PC-9 (cell line): ENCODE measurements at regions of chr3 and their contacts with region 1.

Region 1: DNA sequence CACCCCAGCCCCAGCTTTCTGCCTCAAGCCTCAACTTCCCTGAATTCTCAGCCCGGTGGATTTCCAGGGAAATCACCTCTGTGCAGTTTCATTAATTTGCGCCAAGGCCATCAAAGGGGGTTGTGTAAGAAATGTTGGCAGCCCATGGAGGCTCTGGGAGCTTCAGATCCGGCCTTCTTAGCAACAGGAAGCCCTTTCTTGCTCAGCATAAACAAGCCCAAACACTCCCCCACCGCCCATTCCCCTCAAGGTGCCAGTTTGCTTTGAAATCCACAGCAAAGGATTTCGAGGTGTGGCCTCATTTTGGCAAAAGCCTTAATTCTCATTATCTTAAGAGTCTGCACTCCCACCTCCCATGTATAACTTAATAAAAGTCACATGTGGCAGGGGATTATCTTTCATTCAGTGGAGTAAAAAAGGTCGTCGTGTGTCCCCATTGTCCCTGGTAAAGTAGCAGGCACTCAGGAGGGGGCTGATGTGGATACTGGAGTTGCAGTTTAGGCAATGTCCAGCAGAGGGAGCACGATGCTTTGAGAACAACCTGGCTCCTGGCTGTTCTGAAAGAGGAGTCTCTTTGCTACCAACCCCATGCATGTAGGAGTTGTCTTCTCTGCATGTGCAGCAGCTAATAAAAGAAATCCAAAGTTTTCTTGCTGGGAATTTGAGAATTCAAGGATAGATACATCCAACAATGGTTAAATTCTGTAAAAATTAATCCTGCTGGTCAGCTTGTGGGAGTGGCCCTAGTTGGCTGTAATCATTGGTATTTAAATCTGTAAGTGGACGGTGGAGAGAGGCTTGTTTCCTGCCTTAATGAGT is 39.5 kb downstream of the EBLN2 start:
- DNase-seq: peak; percentile 55 to 70
- H3K4me3 ChIP-seq: no peak overlapping the region
- H3K27ac ChIP-seq: no peak overlapping the region
- H3K4me1 ChIP-seq: no peaks in the 10 kb centered on the region
- H3K27me3 ChIP-seq: peaks cover 35% of the 10 kb centered on the region
- CTCF ChIP-seq: peak; percentile 90

Region 2: DNA sequence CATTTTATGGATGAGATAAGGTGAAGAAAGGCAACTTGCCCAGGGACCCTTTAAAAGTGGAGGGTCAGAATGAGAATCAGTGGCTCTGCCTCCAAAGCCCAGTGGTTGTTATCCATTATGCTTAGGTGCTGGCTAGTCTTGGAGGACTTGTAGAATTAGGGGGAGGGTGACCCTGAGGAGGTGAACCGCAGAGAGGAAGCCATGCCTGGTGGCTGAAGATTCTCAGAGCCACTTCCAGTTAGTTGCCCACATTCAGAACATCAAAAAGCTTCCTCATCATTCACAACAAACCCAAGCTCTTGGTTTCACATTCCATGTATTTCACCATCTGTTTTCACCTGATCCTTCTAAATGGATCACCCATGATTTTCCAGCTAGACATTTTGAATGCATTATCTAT is 28.3 kb before region 1 on chr3:
- CTCF ChIA-PET with region 1: no interaction called
- POLR2A ChIA-PET with region 1: interaction called, 23 read pairs
- intact Hi-C with region 1: no loop called
- DNase-seq: no peak
- H3K4me3 ChIP-seq: no peak overlapping the region
- H3K27ac ChIP-seq: no peak overlapping the region
- H3K4me1 ChIP-seq: no peaks in the 10 kb centered on the region
- H3K27me3 ChIP-seq: no peaks in the 10 kb centered on the region
- CTCF ChIP-seq: no peak

Region 3: GRCh38 chr3:73084170-73084569 is 16.8 kb before region 1 on chr3:
- CTCF ChIA-PET with region 1: no interaction called
- POLR2A ChIA-PET with region 1: no interaction called
- intact Hi-C with region 1: no loop called
- DNase-seq: no peak
- H3K4me3 ChIP-seq: no peak overlapping the region
- H3K27ac ChIP-seq: no peak overlapping the region
- H3K4me1 ChIP-seq: no peaks in the 10 kb centered on the region
- H3K27me3 ChIP-seq: no peaks in the 10 kb centered on the region
- CTCF ChIP-seq: no peak

Region 4: GRCh38 chr3:73432023-73432705 is 331.2 kb after region 1 on chr3:
- CTCF ChIA-PET with region 1: no interaction called
- POLR2A ChIA-PET with region 1: no interaction called
- intact Hi-C with region 1: loop called (anchors 1 kb)
- DNase-seq: no peak
- H3K4me3 ChIP-seq: no peak overlapping the region
- H3K27ac ChIP-seq: no peak overlapping the region
- H3K4me1 ChIP-seq: no peaks in the 10 kb centered on the region
- H3K27me3 ChIP-seq: no peaks in the 10 kb centered on the region
- CTCF ChIP-seq: peak; percentile 74

Region 5: DNA sequence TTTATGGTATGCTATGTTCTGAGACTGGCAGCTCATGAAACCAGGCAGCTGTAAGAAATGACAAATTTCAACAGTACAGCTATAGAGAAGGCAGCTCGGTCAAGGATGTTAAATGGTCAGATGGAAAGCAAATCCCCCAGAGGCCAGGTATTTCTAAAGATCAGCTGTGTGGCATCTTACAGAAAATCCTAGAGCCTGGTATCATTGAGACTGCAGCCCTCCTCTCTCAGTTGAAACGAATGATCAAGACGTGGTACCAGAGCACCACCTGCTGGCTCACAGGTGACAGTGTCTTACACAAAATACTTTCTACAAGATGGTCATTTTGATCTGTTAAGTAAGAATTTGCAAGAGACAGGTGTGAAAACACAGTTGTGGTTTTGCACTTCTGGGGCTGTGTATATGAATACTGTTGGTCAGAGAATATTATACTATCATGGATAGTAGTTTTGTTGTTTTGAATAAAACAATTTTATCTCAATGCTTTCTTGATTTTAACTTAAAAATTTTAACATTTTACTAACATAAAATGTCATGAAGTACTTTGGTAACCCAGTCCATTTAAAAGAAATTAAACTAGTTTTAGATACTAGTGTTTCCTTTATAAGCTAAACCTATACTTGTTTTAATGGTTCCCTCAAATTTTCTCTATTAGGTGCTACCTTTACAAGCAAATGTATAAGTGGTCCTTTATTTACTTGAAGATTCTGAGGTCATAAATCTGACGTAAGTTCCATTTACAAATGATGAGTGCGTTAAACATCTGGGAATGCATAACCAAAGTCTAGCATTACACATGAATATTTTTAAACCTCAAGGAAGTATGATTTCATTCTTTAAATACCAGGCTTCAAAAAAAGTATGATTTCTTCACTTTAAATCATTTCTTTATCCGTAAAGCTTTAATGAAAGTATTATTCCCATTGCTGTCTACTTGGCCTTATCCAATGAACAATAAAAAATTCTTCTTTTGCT is 401.9 kb after region 1 on chr3:
- CTCF ChIA-PET with region 1: no interaction called
- POLR2A ChIA-PET with region 1: no interaction called
- intact Hi-C with region 1: loop called (anchors 1 kb)
- DNase-seq: peak in 1 of 2 experiments; percentile 25
- H3K4me3 ChIP-seq: no peak overlapping the region
- H3K27ac ChIP-seq: no peak overlapping the region
- H3K4me1 ChIP-seq: no peaks in the 10 kb centered on the region
- H3K27me3 ChIP-seq: peaks cover 17% of the 10 kb centered on the region
- CTCF ChIP-seq: peak; percentile 74